ENCODE measurements at regions of chr16 and their contacts with region 1.

Region 1: DNA sequence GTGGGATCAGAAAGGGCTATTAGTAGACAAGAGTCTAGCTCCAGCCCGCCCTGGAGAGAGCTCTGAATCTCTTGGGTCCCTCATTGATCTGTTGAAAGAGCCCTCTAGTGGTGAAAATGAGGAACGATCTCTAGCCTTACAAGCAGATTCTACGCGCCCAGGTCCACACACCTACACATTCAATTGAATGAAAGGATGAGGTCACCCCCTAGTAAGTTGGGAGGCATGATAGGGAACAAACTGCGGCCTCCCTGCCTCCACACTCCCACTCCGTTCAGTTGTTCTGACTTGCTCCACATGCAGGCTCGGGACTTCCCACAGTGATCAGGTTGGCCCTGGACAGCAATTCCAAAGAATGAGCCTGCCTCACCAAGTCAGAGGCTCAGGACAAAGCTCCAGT is 2.9 kb upstream of the CACNG3 start:
- DNase-seq: peak; percentile 49
- ATAC-seq: peak; percentile 47
- H3K4me3 Mint-ChIP-seq: no peak overlapping the region
- H3K27ac Mint-ChIP-seq: no peak overlapping the region
- H3K4me1 Mint-ChIP-seq: peaks cover 3% of the 10 kb centered on the region
- H3K27me3 Mint-ChIP-seq: peaks cover 40% of the 10 kb centered on the region

Region 2: GRCh38 chr16:23917621-23918020 is 335.6 kb before region 1 on chr16:
- CTCF ChIA-PET with region 1: no interaction called
- POLR2A ChIA-PET with region 1: no interaction called
- DNase-seq: no peak
- ATAC-seq: no peak
- H3K4me3 Mint-ChIP-seq: no peak overlapping the region
- H3K27ac Mint-ChIP-seq: no peak overlapping the region
- H3K4me1 Mint-ChIP-seq: peaks cover 13% of the 10 kb centered on the region
- H3K27me3 Mint-ChIP-seq: no peaks in the 10 kb centered on the region

Region 3: DNA sequence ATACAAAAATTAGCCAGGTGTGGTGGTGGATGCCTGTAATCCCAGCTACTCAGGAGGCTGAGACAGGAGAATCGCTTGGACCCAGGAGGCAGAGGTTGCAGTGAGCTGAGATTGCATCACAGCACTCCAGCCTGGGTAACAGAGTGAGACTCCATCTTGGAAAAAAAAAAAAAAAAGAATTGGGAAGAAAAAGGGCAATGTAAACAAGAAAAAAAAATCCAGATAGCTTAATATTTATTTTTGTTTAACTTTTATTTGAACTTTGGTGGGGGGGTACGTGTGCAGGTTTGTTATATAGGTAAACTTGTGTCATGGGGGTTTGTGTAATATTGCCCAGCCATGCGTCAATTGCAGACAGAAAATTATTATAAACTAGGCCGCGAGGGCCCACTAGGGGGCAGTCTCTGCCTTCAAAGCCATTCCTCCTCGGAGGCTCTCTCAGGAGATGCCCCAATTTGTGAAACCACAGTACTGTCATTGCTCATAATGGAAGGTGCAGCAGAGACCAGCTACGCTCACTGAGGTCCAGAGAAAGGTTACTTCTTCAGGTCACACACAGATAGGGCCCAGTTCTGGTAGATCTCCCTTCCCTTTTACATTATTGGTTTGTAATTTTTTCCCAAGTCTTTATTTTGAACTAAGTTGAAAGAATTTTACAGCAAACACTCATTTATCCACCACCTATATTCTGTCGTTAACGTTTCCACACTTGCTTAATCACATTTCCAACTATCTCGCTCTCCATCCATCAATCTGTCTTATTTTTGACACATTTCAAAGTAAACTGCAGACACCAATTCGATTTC is 211.2 kb before region 1 on chr16:
- CTCF ChIA-PET with region 1: interaction called, 27 read pairs
- POLR2A ChIA-PET with region 1: no interaction called
- DNase-seq: peak; percentile 86
- ATAC-seq: peak; percentile 87
- H3K4me3 Mint-ChIP-seq: no peak overlapping the region
- H3K27ac Mint-ChIP-seq: no peak overlapping the region
- H3K4me1 Mint-ChIP-seq: peaks cover 11% of the 10 kb centered on the region
- H3K27me3 Mint-ChIP-seq: no peaks in the 10 kb centered on the region

Region 4: GRCh38 chr16:24070851-24071250 is 182.3 kb before region 1 on chr16:
- CTCF ChIA-PET with region 1: interaction called, 43 read pairs
- POLR2A ChIA-PET with region 1: no interaction called
- DNase-seq: peak; percentile 47
- ATAC-seq: peak; percentile 81
- H3K4me3 Mint-ChIP-seq: no peak overlapping the region
- H3K27ac Mint-ChIP-seq: no peak overlapping the region
- H3K4me1 Mint-ChIP-seq: peaks cover 25% of the 10 kb centered on the region
- H3K27me3 Mint-ChIP-seq: no peaks in the 10 kb centered on the region

Region 5: GRCh38 chr16:24208710-24209109 is 44.5 kb before region 1 on chr16:
- CTCF ChIA-PET with region 1: interaction called, 10 read pairs
- POLR2A ChIA-PET with region 1: no interaction called
- DNase-seq: no peak
- ATAC-seq: no peak
- H3K4me3 Mint-ChIP-seq: no peak overlapping the region
- H3K27ac Mint-ChIP-seq: no peak overlapping the region
- H3K4me1 Mint-ChIP-seq: no peaks in the 10 kb centered on the region
- H3K27me3 Mint-ChIP-seq: no peaks in the 10 kb centered on the region

Region 6: DNA sequence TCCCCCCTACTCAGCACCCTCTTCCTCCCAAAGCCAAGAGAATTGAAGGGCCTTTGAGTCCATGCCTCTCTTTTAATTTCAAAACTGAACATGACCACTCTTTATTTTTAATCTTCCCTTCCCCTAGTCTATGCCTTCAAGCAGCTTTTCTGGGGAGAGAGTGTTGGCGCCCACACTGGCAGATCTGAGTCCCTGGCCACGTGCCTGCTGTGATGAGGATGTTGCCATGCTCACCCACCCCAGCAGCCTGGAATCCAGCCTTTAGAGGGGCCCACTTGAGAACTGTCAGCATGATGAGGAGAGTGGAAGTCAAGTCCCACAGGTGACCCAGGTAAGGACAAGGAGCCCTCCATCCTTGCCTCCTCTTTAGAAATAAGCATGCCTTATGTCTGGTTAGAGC is 17.4 kb before region 1 on chr16:
- CTCF ChIA-PET with region 1: interaction called, 10 read pairs
- POLR2A ChIA-PET with region 1: no interaction called
- DNase-seq: no peak
- ATAC-seq: no peak
- H3K4me3 Mint-ChIP-seq: no peak overlapping the region
- H3K27ac Mint-ChIP-seq: no peak overlapping the region
- H3K4me1 Mint-ChIP-seq: no peaks in the 10 kb centered on the region
- H3K27me3 Mint-ChIP-seq: peaks cover 1% of the 10 kb centered on the region